IMR-90 (cell line): ENCODE measurements at regions of chr11 and their contacts with region 1.

Region 1: DNA sequence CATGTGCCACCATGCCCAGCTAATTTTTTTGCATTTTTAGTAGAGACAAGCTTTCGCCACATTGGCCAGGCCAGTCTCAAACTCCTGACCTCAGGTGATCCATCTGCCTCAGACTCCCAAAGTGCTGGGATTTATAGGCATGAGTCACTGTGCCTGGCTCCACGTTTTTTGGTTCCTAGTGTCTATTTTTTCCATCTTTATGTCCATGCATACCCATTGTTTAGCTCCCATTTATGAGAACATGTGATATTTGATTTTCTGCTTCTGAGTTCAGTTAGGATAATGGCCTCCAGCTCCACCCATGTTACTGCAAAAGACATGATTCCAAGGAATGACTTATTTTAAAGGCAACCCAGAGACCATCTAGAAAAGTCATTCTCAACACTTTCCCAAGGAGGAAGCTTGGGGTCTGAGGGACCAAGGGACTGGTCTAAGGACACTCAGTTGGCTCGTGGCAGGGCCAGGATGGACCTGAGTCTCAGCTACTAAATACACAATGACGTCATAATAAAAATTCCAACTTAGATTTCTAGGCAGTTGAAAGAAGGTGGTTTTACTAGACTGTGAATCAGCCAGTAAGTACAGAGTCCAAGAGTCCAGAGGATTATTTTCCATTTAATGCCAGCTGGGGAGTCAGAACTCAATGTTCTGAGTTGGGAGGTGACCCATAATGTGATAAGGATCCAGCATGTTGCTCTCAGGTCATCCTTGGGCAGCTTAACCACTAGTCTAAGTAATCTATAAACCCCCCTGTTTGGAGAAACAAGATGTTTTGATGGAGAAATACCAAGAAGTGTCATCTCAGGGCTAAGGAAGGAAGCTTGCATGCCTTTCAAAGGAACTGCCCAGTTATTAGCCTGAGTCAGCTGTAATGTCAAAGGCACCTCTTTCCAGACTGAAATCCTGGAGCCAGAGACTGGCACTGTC is 39.4 kb downstream of the ABTB2 start:
- DNase-seq: peak; percentile 58
- ATAC-seq: peak; percentile 65
- H3K4me3 ChIP-seq: no peak overlapping the region
- H3K27ac ChIP-seq: no peak overlapping the region
- H3K4me1 ChIP-seq: peaks cover 5% of the 10 kb centered on the region
- H3K27me3 ChIP-seq: peaks cover 19% of the 10 kb centered on the region
- CTCF ChIP-seq: no peak
- POLR2A ChIP-seq: no peak
- RAD21 ChIP-seq: no peak

Region 2: GRCh38 chr11:34086554-34087283 is 231.7 kb before region 1 on chr11:
- CTCF ChIA-PET with region 1: no interaction called
- POLR2A ChIA-PET with region 1: no interaction called
- dilution Hi-C with region 1: no loop called
- in situ Hi-C with region 1: no loop called
- intact Hi-C with region 1: no loop called
- DNase-seq: peak; percentile 70
- ATAC-seq: no peak
- H3K4me3 ChIP-seq: no peak overlapping the region
- H3K27ac ChIP-seq: no peak overlapping the region
- H3K4me1 ChIP-seq: no peaks in the 10 kb centered on the region
- H3K27me3 ChIP-seq: no peaks in the 10 kb centered on the region
- CTCF ChIP-seq: no peak
- POLR2A ChIP-seq: no peak
- RAD21 ChIP-seq: no peak

Region 3: DNA sequence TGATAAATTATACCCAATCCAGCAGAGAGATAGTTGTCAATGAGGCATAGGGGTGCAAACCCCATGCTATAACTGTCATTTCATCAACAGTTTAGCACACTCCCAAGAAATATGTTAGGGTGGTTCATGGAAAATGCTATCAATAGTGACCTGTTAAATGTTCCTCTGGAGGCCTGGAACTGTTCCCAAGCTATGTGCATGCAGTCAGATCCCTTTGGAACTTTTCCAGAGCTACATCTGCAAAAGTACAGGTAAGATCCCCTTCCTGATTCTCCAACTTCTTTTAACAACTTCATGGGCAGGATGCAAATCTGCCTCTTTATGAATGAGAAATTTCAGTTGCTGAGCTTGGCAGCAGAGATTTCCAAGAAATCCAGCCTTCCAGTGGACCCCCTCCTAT is 12.3 kb after region 1 on chr11:
- CTCF ChIA-PET with region 1: no interaction called
- POLR2A ChIA-PET with region 1: no interaction called
- dilution Hi-C with region 1: no loop called
- in situ Hi-C with region 1: no loop called
- intact Hi-C with region 1: loop called (anchors 1 kb)
- DNase-seq: no peak
- ATAC-seq: no peak
- H3K4me3 ChIP-seq: no peak overlapping the region
- H3K27ac ChIP-seq: no peak overlapping the region
- H3K4me1 ChIP-seq: peaks cover 2% of the 10 kb centered on the region; the same call in 1 of the 2 replicates
- H3K27me3 ChIP-seq: peaks cover 18% of the 10 kb centered on the region
- CTCF ChIP-seq: no peak
- POLR2A ChIP-seq: no peak
- RAD21 ChIP-seq: no peak